ENCODE measurements at regions of chr17 and their contacts with region 1.

Region 1: DNA sequence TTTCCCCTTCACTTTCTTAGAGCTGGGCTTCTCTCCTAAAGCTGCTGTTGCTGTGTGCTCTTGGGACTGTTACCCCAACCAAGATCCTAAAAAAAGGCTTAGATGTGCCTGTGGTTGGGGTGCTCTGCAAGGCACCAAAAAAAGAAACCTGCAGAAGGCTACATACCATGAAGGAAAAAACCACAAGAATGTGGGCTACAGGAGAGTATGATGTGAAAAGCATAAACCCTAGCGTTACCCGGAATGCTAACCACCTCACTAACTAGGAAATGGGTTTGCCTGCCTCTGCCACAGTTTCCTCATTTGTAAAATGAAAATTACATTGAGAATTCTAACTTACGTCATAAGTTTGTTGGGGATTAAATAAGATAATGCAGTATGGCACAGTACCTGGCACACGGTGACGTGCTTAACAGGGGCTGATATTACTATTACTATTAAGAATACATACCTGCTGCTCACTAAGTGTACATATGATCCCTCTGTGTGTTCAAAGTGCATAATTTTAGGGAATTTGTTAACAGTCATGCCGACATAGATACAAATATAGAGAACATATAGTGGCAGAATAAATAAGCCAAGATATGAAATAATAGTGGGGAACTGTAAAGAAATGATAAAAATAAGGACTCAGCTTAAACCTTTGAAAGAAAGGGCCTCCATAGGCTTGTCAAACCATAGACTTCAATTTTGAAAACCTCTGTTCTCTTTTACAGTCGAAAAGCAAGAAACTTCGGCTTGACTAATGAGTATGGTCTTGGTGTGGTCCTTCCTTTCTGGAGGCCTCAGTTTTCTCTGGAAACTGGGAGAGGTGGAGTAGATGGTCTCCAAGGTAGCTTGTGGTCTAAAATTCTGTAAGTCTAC is 177.8 kb upstream of the TBX2 start:
- DNase-seq: peak in 2 of 9 experiments; percentile 7 to 50
- ATAC-seq: peak; percentile 27
- H3K4me3 ChIP-seq: peak overlapping the region; percentile 9 to 26
- H3K4me3 Mint-ChIP-seq: peak overlapping the region; percentile 80
- H3K27ac ChIP-seq: peak overlapping the region in 1 of 2 experiments; percentile 32
- H3K27ac Mint-ChIP-seq: peak overlapping the region; percentile 16
- H3K4me1 ChIP-seq: peaks cover 27% of the 10 kb centered on the region
- H3K4me1 Mint-ChIP-seq: peaks cover 28% of the 10 kb centered on the region
- H3K27me3 ChIP-seq: no peaks in the 10 kb centered on the region
- H3K27me3 Mint-ChIP-seq: no peaks in the 10 kb centered on the region
- CTCF ChIP-seq: no peak

Region 2: DNA sequence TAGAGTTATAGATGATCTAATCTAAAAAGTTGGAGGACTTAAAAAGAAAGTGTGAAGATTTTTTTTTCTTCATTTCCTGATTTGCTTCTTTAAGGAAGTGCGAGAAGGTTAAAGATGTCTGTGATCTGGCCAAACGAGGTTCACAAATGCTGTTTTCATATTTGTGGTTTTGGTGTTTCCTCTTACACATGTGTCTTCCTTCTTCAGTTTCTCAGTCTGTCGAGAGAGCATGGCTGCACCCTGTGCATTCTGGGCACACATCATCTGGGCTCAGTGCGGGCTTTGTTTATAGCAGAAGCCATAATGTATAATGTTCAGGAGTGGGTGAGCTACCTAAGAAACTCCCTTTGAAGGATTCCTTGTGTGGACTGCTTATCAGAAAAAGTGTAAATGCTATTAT is 82.6 kb before region 1 on chr17:
- CTCF ChIA-PET with region 1: no interaction called
- POLR2A ChIA-PET with region 1: no interaction called
- intact Hi-C with region 1: loop called (anchors 1 to 5 kb)
- DNase-seq: peak; percentile 19 to 89 (median 54)
- ATAC-seq: peak; percentile 98
- H3K4me3 ChIP-seq: no peak overlapping the region
- H3K4me3 Mint-ChIP-seq: peak overlapping the region; percentile 71
- H3K27ac ChIP-seq: peak overlapping the region in 1 of 2 experiments; percentile 37
- H3K27ac Mint-ChIP-seq: peak overlapping the region; percentile 84
- H3K4me1 ChIP-seq: peaks cover 23% of the 10 kb centered on the region
- H3K4me1 Mint-ChIP-seq: peaks cover 33% of the 10 kb centered on the region
- H3K27me3 ChIP-seq: no peaks in the 10 kb centered on the region
- H3K27me3 Mint-ChIP-seq: no peaks in the 10 kb centered on the region
- CTCF ChIP-seq: no peak

Region 3: GRCh38 chr17:61196302-61196704 is 25.5 kb before region 1 on chr17:
- CTCF ChIA-PET with region 1: no interaction called
- POLR2A ChIA-PET with region 1: interaction called, 4 read pairs
- intact Hi-C with region 1: loop called in 1 of 2 experiments (anchors 1 kb)
- DNase-seq: no peak
- ATAC-seq: no peak
- H3K4me3 ChIP-seq: no peak overlapping the region
- H3K4me3 Mint-ChIP-seq: no peak overlapping the region
- H3K27ac ChIP-seq: no peak overlapping the region
- H3K27ac Mint-ChIP-seq: no peak overlapping the region
- H3K4me1 ChIP-seq: no peaks in the 10 kb centered on the region
- H3K4me1 Mint-ChIP-seq: no peaks in the 10 kb centered on the region
- H3K27me3 ChIP-seq: no peaks in the 10 kb centered on the region
- H3K27me3 Mint-ChIP-seq: no peaks in the 10 kb centered on the region
- CTCF ChIP-seq: no peak

Region 4: DNA sequence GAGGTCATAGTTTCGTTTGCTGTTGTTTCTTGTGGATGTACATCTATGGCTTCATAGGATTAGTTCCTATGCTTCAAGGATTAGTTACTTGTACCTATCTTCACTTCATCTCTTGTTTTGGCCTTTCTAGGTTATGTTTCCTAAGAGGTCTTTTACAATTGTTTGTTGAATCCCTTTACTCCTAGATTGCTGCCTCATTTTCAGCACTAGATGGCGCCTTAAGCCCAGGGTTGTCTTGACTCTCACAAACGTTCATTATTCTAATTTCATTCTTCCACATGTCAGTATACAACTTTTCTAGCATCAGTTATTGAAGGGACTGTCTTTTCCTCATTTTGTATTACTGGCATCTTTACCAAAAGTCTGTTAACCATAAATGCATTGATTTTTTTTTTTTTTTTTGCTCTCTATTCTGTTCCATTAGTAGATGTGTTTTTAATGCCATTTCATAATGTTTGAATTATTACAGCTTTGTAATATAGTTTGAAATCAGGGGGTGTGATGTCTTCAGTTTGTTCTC is 414.1 kb after region 1 on chr17:
- CTCF ChIA-PET with region 1: no interaction called
- POLR2A ChIA-PET with region 1: no interaction called
- intact Hi-C with region 1: no loop called
- DNase-seq: peak in 8 of 9 experiments; percentile 11 to 69 (median 32)
- ATAC-seq: no peak
- H3K4me3 ChIP-seq: no peak overlapping the region
- H3K4me3 Mint-ChIP-seq: no peak overlapping the region
- H3K27ac ChIP-seq: no peak overlapping the region
- H3K27ac Mint-ChIP-seq: no peak overlapping the region
- H3K4me1 ChIP-seq: no peaks in the 10 kb centered on the region
- H3K4me1 Mint-ChIP-seq: no peaks in the 10 kb centered on the region
- H3K27me3 ChIP-seq: peaks cover 3 to 7% of the 10 kb centered on the region in 2 experiments
- H3K27me3 Mint-ChIP-seq: peaks cover 46% of the 10 kb centered on the region
- CTCF ChIP-seq: peak; percentile 49